ENCODE measurements at regions of chr16 and their contacts with region 1.

Region 1: GRCh38 chr16:86761111-86762031 is 183.0 kb downstream of the FOXL1 start:
- DNase-seq: peak in 6 of 9 donors; percentile 3 to 54 (median 16)
- ATAC-seq: peak; percentile 37
- H3K4me3 ChIP-seq: no peak overlapping the region
- H3K4me3 Mint-ChIP-seq: no peak overlapping the region
- H3K27ac ChIP-seq: no peak overlapping the region
- H3K27ac Mint-ChIP-seq: no peak overlapping the region
- H3K4me1 ChIP-seq: no peaks in the 10 kb centered on the region
- H3K4me1 Mint-ChIP-seq: peaks cover 0 to 6% (median 0%) of the 10 kb centered on the region in 7 donors
- H3K27me3 ChIP-seq: peaks cover 0 to 5% of the 10 kb centered on the region in 2 donors
- H3K27me3 Mint-ChIP-seq: peaks cover 33 to 49% (median 44%) of the 10 kb centered on the region in 5 donors

Region 2: DNA sequence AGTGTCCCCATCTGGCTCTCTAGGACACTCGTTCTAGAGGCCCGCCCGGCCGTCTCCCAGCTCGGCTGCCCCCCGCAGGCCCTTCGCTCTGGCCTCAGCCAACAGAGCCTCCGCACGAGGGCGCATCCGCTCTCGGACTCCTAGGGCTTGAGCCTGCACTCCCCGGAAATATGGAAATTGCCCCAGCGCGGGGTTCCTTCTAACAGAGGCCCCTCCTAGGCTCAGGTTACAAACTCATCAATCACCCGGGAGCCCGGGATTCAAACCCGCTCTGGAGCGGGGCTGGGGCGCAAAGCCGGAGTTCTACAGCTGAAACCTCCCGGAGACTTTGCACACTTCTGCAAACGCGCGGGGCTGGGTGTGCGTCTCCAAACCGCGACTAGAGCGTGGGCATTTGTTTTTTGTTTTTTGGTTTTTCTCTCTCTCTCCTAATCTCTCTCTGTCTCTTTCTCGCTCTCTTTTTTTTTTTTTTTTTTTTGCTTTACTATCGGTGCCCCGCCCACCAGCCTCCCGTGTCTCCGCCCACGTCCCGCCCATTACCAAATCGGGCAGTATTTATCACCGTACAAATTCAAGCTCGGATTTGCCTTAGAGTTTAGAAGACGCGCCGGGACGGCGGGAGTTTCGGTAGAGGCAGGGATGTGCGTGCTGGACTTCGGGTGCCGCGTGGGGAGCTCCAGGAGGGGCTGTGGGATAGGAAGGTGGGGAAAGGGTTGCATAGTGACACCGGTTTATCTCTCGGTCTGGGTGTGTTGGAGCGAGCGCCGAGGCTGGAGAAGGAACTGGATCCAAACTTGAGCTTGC is 185.4 kb before region 1 on chr16:
- CTCF ChIA-PET with region 1: no interaction called
- POLR2A ChIA-PET with region 1: no interaction called
- intact Hi-C with region 1: loop called in 1 of 2 experiments (anchors 5 kb)
- DNase-seq: peak in 2 of 9 donors; percentile 41 to 58
- ATAC-seq: peak; percentile 64
- H3K4me3 ChIP-seq: peak overlapping the region; percentile 13
- H3K4me3 Mint-ChIP-seq: peak overlapping the region; percentile 47 to 85 (median 75)
- H3K27ac ChIP-seq: no peak overlapping the region
- H3K27ac Mint-ChIP-seq: peak overlapping the region in 2 of 9 donors; percentile 4 to 26
- H3K4me1 ChIP-seq: no peaks in the 10 kb centered on the region
- H3K4me1 Mint-ChIP-seq: peaks cover 0 to 23% (median 5%) of the 10 kb centered on the region in 7 donors
- H3K27me3 ChIP-seq: peaks cover 4 to 9% of the 10 kb centered on the region in 2 donors
- H3K27me3 Mint-ChIP-seq: peaks cover 66 to 91% (median 71%) of the 10 kb centered on the region in 5 donors

Measured in naive thymus-derived CD4-positive, alpha-beta T cell (primary cell).